Heart right ventricle (tissue), 16 donors: ENCODE measurements at regions of chr16 and their contacts with region 1.

Region 1: GRCh38 chr16:35298460-35299243 is 1839.2 kb downstream of the TP53TG3F start:
- DNase-seq: no peak
- ATAC-seq: no peak
- H3K4me3 ChIP-seq: no peak overlapping the region
- H3K27ac ChIP-seq: no peak overlapping the region
- H3K4me1 ChIP-seq: no peaks in the 10 kb centered on the region
- H3K27me3 ChIP-seq: no peaks in the 10 kb centered on the region
- CTCF ChIP-seq: no peak

Region 2: DNA sequence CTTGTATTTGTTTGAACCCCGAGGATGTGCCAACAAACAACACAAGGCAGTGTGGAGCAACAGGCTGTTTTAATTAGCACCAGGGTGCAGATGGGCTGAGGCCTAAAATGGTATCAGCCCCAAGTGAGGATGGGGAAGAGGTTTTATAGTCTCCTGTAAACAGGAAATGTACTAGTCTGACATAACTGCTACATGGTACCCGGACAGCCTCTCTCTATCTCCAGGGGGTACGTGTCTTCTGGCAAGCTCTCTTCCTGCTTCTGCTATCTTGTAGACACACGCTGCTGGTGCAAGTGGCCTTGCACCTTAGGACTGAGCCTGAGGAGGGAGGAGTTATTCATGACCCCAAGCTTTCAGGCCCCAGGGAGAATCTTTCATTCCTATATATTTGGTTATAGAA is 611.8 kb after region 1 on chr16:
- intact Hi-C with region 1: loop called in 1 of 10 experiments (anchors 10 kb)
- DNase-seq: no peak
- ATAC-seq: no peak
- H3K4me3 ChIP-seq: no peak overlapping the region
- H3K27ac ChIP-seq: no peak overlapping the region
- H3K4me1 ChIP-seq: no peaks in the 10 kb centered on the region
- H3K27me3 ChIP-seq: no peaks in the 10 kb centered on the region
- CTCF ChIP-seq: no peak